PC-9 (cell line): ENCODE measurements at regions of chr14 and their contacts with region 1.

Region 1: DNA sequence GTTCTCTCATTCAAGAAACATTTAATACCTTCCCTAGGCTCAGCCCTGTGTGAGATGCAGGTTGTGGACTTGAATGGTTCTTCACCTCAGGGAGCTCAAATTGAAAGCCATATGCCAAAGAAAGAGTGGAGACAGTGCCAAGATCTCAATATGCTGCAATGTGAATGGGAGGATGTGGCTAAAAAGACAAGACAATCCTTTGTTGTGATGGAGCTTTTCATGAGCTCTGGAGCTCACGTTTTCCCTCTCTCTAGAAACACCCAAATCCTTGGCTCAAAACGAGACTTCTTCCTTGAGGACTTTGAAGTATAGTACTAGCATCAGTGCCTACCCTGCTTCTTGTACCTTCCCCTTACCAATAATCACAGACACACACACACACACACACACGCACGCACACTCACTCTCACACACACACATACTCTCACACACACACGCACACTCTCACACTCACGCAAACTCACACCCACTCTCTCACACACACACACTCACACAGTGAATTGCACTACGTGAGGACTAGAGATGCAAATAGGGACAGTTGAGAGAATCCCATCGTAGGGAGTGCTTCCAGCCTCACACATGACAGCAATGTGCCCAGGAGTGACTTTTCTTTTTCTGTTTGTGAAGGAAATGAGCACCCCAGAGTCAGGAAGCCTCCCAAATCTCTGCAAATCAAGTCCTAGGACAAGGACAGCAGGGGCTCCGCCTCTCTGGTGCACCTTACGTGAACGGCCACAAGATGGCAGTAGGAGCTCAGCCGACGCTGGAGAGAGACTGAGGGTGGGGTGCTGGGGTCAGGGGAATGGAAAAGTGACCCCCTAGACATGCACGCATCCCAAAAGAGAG is 231.4 kb downstream of the PCNX1 start:
- DNase-seq: peak; percentile 44 to 57
- H3K4me3 ChIP-seq: no peak overlapping the region
- H3K27ac ChIP-seq: no peak overlapping the region
- H3K4me1 ChIP-seq: peaks cover 33% of the 10 kb centered on the region
- H3K27me3 ChIP-seq: no peaks in the 10 kb centered on the region
- CTCF ChIP-seq: peak; percentile 99

Region 2: GRCh38 chr14:69242311-69243224 is 1896.1 kb before region 1 on chr14:
- CTCF ChIA-PET with region 1: no interaction called
- POLR2A ChIA-PET with region 1: no interaction called
- intact Hi-C with region 1: loop called (anchors 1 kb)
- DNase-seq: peak in 1 of 2 experiments; percentile 47
- H3K4me3 ChIP-seq: no peak overlapping the region
- H3K27ac ChIP-seq: no peak overlapping the region
- H3K4me1 ChIP-seq: no peaks in the 10 kb centered on the region
- H3K27me3 ChIP-seq: no peaks in the 10 kb centered on the region
- CTCF ChIP-seq: peak; percentile 94

Region 3: DNA sequence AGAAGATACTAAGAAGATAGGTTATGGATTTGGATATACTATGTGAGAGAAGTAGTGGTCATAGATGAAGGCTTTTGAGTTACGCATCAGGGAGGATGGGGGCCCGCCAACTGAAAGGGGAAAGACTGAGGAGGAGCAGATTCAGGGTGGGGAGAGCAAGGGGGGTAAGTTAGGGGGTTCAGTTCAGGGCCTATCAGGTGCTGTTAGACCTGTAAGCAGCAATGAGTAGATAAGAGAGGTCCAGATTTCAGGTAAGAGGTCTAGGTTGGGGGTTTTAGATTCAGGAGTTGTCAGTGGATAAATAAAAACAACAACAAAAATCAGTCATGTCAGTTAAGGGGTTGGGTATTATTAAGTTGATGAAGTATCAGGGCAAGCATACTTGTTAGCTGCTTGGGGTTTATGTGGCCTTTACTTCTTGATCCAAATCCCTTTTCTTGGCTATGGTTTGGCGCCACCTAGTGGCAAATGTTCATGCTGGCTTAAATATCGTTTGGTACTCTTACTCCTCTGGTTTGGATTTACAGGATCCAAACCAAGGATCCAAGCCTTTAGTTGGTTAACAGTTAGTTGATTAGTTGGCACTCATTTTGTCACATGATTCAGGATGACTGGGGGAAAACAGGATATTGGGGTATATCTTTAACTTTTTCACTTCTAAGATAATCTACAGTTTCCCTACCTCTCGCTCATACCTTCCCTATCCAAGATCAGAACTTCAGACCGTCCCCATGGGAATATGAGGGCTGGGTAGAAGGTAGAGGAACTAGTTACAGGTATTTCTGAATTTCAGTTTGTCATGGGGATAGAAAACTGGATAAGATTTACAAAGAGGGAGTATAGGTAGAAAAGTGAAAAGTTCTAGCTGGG is 166.3 kb before region 1 on chr14:
- CTCF ChIA-PET with region 1: no interaction called
- POLR2A ChIA-PET with region 1: no interaction called
- intact Hi-C with region 1: no loop called
- DNase-seq: peak; percentile 61 to 71
- H3K4me3 ChIP-seq: no peak overlapping the region
- H3K27ac ChIP-seq: no peak overlapping the region
- H3K4me1 ChIP-seq: no peaks in the 10 kb centered on the region
- H3K27me3 ChIP-seq: no peaks in the 10 kb centered on the region
- CTCF ChIP-seq: peak; percentile 97

Region 4: GRCh38 chr14:71228711-71229110 is 90.0 kb after region 1 on chr14:
- CTCF ChIA-PET with region 1: no interaction called
- POLR2A ChIA-PET with region 1: no interaction called
- intact Hi-C with region 1: loop called (anchors 2 kb)
- DNase-seq: peak; percentile 21 to 81
- H3K4me3 ChIP-seq: no peak overlapping the region
- H3K27ac ChIP-seq: peak overlapping the region; percentile 63
- H3K4me1 ChIP-seq: peaks cover 22% of the 10 kb centered on the region
- H3K27me3 ChIP-seq: no peaks in the 10 kb centered on the region
- CTCF ChIP-seq: no peak

Region 5: GRCh38 chr14:71355324-71356201 is 216.9 kb after region 1 on chr14:
- CTCF ChIA-PET with region 1: no interaction called
- POLR2A ChIA-PET with region 1: no interaction called
- intact Hi-C with region 1: no loop called
- DNase-seq: no peak
- H3K4me3 ChIP-seq: no peak overlapping the region
- H3K27ac ChIP-seq: 0 out of 2 replicates have a peak overlapping the region, but pooled peaks have one; percentile 4
- H3K4me1 ChIP-seq: peaks cover 4% of the 10 kb centered on the region; the same call in 1 of the 2 replicates
- H3K27me3 ChIP-seq: no peaks in the 10 kb centered on the region
- CTCF ChIP-seq: no peak

Region 6: DNA sequence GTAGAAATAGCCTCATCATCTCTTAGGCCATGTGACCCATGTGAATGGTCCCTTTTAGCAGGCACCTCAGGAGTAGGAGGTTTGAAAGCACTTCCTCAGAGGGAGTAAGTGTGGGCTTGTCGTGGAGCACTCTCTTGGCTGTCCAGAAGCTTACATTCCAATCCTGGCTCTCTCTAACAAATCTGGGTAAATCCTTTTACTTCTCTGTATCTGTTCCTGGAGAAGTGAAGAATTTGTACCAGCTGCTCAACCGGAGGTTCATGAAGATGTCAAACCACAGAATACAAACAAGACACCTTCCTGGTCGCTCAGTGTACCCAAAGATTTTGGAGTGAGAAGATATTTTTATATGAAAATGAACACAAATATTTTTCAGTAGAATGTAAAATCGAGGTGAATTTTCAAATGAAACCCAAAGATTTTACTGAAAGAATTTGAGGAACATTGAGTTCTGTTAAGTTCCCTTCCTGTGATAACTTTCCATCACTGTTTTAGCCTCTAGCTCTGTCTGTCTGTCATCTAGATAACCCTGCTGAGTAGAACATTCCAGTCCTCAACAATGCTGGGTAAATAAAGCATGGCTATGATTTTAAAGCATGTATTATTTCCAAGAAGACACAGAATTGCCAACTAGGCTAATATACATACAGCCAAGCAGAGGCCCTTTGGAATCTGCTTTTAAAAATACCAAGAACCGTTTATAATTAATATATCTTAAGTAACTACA is 529.7 kb after region 1 on chr14:
- CTCF ChIA-PET with region 1: interaction called, 12 read pairs
- POLR2A ChIA-PET with region 1: no interaction called
- intact Hi-C with region 1: no loop called
- DNase-seq: no peak
- H3K4me3 ChIP-seq: no peak overlapping the region
- H3K27ac ChIP-seq: no peak overlapping the region
- H3K4me1 ChIP-seq: no peaks in the 10 kb centered on the region
- H3K27me3 ChIP-seq: no peaks in the 10 kb centered on the region
- CTCF ChIP-seq: no peak

Region 7: DNA sequence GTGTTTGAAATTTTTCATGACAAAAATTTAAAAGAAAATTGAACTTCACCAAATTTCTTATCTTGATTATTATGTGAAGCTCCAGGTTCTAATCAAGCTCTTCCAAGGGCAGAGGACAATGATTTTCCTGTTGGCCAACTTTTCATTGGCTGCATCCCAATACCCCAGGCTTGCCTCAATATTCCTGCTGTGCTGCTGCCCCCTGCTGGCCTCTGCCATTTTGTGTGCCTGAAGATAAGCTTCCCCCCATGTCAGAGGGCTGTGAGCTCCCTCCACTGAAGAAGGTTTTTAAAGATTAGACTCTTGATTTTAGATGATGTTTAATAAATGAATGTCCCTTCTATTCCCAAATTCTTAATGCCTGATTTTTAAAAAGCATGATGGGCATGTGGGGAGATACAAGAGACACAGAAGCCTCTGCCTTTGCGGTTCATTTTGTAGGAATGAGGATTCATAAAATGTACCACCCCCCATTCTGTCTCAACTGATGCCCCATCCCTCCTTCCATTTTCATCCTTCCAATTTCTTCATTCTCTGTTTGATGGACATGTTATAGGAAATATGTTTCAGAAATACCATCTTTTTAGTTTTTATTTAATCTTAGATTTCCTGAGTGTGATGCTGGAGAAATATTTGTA is 716.8 kb after region 1 on chr14:
- CTCF ChIA-PET with region 1: no interaction called
- POLR2A ChIA-PET with region 1: no interaction called
- intact Hi-C with region 1: loop called (anchors 1 kb)
- DNase-seq: peak in 1 of 2 experiments; percentile 58
- H3K4me3 ChIP-seq: no peak overlapping the region
- H3K27ac ChIP-seq: no peak overlapping the region
- H3K4me1 ChIP-seq: no peaks in the 10 kb centered on the region
- H3K27me3 ChIP-seq: no peaks in the 10 kb centered on the region
- CTCF ChIP-seq: peak; percentile 73